BJ (cell line): ENCODE measurements at regions of chr11 and their contacts with region 1.

Region 1: DNA sequence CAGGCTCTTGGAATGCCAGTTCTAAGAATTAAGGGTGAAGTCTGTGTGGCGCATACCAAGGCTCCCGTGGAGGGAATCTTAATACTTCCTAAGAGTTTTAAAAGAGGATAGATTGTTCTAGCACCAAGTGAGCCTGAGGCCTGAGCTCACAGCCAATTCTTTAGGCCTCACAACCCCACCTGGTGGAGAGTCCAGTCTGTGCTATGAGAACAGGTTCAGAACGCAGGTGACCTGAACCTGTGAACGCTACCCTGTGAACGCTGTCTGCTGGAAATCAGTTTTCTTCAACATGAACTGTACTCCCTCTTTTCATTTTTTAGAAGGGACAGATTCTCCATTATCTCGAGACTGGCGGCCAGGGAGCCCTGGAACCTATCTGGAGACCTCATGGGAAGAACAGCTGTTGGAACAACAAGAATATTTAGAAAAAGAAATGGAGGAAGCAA is 43.2 kb upstream of the DLAT start:
- DNase-seq: no peak
- H3K4me3 ChIP-seq: no peak overlapping the region
- H3K27me3 ChIP-seq: no peaks in the 10 kb centered on the region
- CTCF ChIP-seq: peak; percentile 64

Region 2: GRCh38 chr11:111878849-111879636 is 103.0 kb before region 1 on chr11 and contains the starts of genes CFAP68 and FDXACB1:
- CTCF ChIA-PET with region 1: interaction called, 39 read pairs
- POLR2A ChIA-PET with region 1: no interaction called
- DNase-seq: peak; percentile 81
- H3K4me3 ChIP-seq: peak within 1 kb of the TSS; percentile 62
- H3K27me3 ChIP-seq: no peaks in the 10 kb centered on the region
- CTCF ChIP-seq: peak; percentile 99
- polyA plus RNA-seq, gene CFAP68: 16.6 and 33.0 TPM in 2 replicates
- polyA plus RNA-seq, gene FDXACB1: 0.81 and 1.2 TPM in 2 replicates

Region 3: GRCh38 chr11:111926505-111927391 is 55.3 kb before region 1 on chr11:
- CTCF ChIA-PET with region 1: interaction called, 33 read pairs
- POLR2A ChIA-PET with region 1: interaction called, 3 read pairs
- DNase-seq: peak; percentile 86
- H3K4me3 ChIP-seq: peak overlapping the region; percentile 40
- H3K27me3 ChIP-seq: no peaks in the 10 kb centered on the region
- CTCF ChIP-seq: peak; percentile 7; the same call in 1 of the 2 replicates

Region 4: DNA sequence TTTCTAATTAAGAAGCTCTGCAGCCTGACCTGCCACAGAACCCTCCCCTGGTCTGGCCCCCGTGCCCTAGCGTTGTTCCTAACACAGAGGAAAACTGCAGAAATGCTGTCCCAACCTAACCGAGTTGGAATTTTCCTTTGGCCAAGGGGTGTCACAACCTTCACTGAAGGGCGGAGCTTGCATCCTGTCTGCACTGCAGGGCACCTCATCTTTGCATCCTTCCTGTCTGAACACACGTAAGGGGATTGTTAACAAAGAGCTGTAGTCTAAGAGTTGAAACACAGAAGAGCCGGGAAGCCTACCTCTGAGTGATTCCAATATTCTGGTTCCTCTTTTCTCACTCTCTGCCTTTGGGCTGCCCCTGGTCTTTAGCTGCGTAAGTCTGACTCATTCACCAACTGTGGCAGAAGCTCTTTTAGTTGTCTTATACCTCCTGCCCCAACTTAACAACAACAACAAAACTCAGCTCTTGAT is 43.3 kb before region 1 on chr11:
- CTCF ChIA-PET with region 1: interaction called, 65 read pairs
- POLR2A ChIA-PET with region 1: no interaction called
- DNase-seq: no peak
- H3K4me3 ChIP-seq: no peak overlapping the region; the same call in 1 of the 2 replicates
- H3K27me3 ChIP-seq: no peaks in the 10 kb centered on the region
- CTCF ChIP-seq: no peak